ENCODE measurements at regions of chr19 and their contacts with region 1.

Region 1: DNA sequence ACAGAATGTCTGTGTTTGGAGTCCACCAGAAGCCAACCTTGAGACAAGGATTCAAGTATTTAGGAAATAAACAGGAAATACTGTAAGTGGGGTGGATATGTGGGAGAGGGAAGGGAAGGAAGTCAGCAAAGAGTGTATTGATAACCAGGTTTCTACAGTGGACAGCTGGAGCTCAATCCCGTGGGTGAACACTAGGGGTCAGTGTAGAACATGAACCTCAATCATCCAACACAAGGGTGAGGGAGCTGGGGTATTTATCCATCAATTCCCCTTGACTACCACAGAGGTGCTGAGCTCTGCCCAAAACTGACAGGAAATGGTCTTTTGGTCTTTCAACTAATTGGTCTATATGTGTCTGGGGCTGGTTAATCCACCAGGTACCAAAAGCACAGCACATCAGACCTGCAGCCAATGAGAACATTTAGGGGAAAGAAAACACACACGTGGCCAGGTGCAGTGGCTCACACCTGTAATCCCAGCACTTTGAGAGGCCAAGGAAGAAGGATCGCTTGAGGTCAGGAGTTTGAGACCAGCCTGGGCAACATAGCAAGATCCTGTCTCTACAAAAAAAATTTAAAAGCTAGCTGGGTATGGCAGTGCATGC is 5.6 kb upstream of the SYDE1 start:
- DNase-seq: peak; percentile 84
- ATAC-seq: peak; percentile 93
- H3K4me3 Mint-ChIP-seq: no peak overlapping the region
- H3K27ac Mint-ChIP-seq: no peak overlapping the region
- H3K4me1 Mint-ChIP-seq: peaks cover 2% of the 10 kb centered on the region
- H3K27me3 Mint-ChIP-seq: peaks cover 8% of the 10 kb centered on the region; the same call in 1 of the 2 replicates
- CTCF ChIP-seq: peak; percentile 67

Region 2: GRCh38 chr19:14786421-14786851 is 315.1 kb before region 1 on chr19:
- CTCF ChIA-PET with region 1: interaction called, 11 read pairs
- POLR2A ChIA-PET with region 1: no interaction called
- DNase-seq: peak; percentile 78
- ATAC-seq: peak; percentile 94
- H3K4me3 Mint-ChIP-seq: peak overlapping the region; percentile 53
- H3K27ac Mint-ChIP-seq: peak overlapping the region; percentile 70; the same call in 1 of the 2 replicates
- H3K4me1 Mint-ChIP-seq: peaks cover 10% of the 10 kb centered on the region
- H3K27me3 Mint-ChIP-seq: 0 out of 2 replicates have a peak, but pooled peaks cover 4% of the 10 kb centered on the region
- CTCF ChIP-seq: peak; percentile 84

Region 3: DNA sequence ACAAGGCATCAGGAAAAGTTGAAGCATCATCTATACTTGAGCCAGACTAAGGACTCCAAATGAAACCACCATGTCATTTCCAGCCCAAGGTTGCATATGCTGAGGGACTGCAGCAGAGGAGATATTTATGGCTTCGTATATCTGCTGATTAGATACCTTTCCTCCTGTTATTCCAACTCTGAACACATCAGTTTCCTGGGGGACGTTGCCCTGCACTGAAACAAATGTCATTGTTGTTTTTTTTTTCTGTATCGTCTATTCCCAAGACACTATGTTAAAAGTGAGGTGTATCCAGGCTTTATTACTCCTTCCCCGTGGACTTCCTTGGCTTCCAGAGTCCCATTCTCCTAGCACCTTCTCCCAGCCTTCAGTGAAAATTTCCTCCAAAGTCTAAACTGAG is 215.5 kb before region 1 on chr19 and contains the start of gene OR7A17:
- CTCF ChIA-PET with region 1: no interaction called
- POLR2A ChIA-PET with region 1: no interaction called
- DNase-seq: no peak
- ATAC-seq: no peak
- H3K4me3 Mint-ChIP-seq: no peak within 1 kb of the TSS
- H3K27ac Mint-ChIP-seq: no peak within 1 kb of the TSS
- H3K4me1 Mint-ChIP-seq: 0 out of 2 replicates have a peak, but pooled peaks cover 5% of the 10 kb centered on the region
- H3K27me3 Mint-ChIP-seq: peaks cover 19% of the 10 kb centered on the region
- CTCF ChIP-seq: no peak
- total RNA-seq, gene OR7A17: not detected in 3 replicates

Region 4: DNA sequence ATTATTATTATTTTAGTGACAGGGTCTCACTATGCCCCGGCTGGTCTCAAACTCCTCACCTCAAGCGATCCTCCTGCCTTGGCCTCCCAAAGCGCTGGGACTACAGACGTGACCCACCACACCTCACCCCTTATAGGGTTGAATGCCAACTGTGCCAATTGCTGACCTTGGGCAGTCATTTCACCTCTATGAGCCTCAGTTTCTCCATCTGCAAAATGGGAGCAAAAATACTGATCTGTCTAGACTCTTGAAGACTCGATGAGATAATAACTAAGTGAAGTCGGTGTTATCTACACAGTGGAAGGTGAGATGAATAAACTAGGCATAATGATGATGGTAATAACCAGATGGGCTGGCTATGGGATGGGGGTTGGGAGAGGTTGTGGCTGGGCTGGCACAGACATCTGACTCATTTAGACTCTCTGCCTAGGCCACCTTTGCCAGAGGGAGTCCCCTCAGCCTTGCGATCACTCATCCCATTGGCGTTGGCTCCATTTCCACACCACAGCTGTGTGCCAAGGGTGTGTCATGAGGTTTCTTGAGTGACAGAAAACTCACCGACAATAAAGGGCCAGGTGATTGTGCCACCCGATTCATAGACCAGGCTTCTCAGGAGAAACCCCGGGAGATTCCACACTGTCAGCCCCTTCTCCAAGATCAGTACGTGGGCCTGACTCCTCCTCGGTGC is 52.6 kb before region 1 on chr19 and contains the start of gene CASP14:
- CTCF ChIA-PET with region 1: no interaction called
- POLR2A ChIA-PET with region 1: no interaction called
- DNase-seq: no peak
- ATAC-seq: no peak
- H3K4me3 Mint-ChIP-seq: no peak within 1 kb of the TSS
- H3K27ac Mint-ChIP-seq: no peak within 1 kb of the TSS
- H3K4me1 Mint-ChIP-seq: no peaks in the 10 kb centered on the region
- H3K27me3 Mint-ChIP-seq: peaks cover 38% of the 10 kb centered on the region
- CTCF ChIP-seq: no peak
- total RNA-seq, gene CASP14: not detected in 3 replicates

Region 5: GRCh38 chr19:15112386-15112785 is 10.8 kb after region 1 on chr19:
- CTCF ChIA-PET with region 1: interaction called, 20 read pairs
- POLR2A ChIA-PET with region 1: no interaction called
- DNase-seq: peak; percentile 32
- ATAC-seq: peak; percentile 58
- H3K4me3 Mint-ChIP-seq: no peak overlapping the region
- H3K27ac Mint-ChIP-seq: peak overlapping the region; percentile 66; the same call in 1 of the 2 replicates
- H3K4me1 Mint-ChIP-seq: peaks cover 10% of the 10 kb centered on the region
- H3K27me3 Mint-ChIP-seq: no peaks in the 10 kb centered on the region
- CTCF ChIP-seq: peak; percentile 18; the same call in 1 of the 2 replicates

Region 6: DNA sequence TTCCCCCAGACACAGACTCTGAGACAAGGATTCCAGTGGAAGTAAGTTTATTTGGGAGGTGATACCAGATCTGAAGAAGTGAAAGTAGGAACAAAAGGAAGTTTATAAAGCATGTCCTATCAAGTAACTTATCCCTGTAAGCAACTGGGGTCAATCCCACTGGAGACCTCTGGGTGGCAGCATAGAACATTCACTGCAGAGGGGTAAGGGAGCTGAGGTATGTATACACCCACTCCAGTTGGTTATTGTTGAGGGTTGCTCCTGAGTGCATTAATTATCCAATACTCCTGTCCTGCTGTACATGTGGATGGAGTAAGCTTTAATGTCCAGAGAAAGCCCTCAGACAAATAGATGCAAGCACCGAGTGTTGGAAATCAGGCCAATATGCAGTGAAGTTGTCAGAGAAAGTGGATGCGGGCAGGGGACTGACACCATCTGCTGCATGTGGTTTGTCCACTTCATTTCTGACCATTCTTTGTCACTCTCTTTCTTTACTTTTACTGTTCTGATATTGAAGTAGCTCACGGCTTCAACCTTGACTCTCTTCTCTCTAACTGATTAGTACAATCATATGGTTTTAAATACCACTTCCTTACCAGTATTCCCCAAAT is 52.5 kb after region 1 on chr19:
- CTCF ChIA-PET with region 1: interaction called, 103 read pairs
- POLR2A ChIA-PET with region 1: no interaction called
- DNase-seq: peak; percentile 82
- ATAC-seq: peak; percentile 75
- H3K4me3 Mint-ChIP-seq: no peak overlapping the region
- H3K27ac Mint-ChIP-seq: no peak overlapping the region
- H3K4me1 Mint-ChIP-seq: no peaks in the 10 kb centered on the region; the same call in 1 of the 2 replicates
- H3K27me3 Mint-ChIP-seq: peaks cover 3% of the 10 kb centered on the region; the same call in 1 of the 2 replicates
- CTCF ChIP-seq: peak; percentile 55

Region 7: DNA sequence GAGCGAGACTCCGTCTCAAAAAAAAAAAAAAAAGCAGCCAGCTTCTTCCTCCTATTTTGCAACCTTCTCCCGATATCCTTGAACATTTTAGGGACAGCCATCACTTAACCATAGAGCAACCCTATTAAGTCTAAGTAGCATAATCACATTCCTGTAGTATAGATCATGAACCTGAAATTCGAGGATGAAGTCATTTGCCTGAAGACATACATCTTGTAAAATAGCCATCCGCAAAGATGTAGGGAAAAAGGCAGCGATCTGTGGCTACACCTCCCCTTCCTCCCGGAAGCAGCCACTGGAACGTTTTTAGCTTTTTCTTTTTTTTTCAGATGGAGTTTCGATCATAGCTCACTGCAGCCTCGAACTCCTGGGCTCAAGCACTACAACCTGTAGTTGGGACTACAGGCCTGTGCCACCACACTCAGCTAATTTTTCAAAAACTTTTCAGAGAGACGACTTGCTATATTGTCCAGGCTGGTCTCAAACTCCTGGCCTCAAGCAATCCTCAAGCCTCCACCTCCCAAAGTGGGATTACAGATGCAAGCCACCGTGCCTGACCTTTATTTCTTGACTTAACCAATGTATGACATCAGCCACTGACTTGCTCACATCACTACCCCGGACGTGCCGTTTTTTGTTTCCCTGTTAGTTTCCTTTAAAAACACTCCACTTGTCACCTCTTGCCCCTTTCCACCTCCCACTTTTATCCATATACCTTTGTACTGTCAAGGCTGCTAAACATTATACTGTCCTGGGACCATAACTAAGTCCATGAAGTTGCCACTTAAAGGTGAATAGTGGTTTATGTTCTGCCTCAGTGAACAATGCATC is 132.7 kb after region 1 on chr19:
- CTCF ChIA-PET with region 1: interaction called, 29 read pairs
- POLR2A ChIA-PET with region 1: no interaction called
- DNase-seq: no peak
- ATAC-seq: no peak
- H3K4me3 Mint-ChIP-seq: peak overlapping the region; percentile 63
- H3K27ac Mint-ChIP-seq: peak overlapping the region; percentile 82
- H3K4me1 Mint-ChIP-seq: peaks cover 8% of the 10 kb centered on the region; the same call in 1 of the 2 replicates
- H3K27me3 Mint-ChIP-seq: no peaks in the 10 kb centered on the region
- CTCF ChIP-seq: no peak

Region 8: DNA sequence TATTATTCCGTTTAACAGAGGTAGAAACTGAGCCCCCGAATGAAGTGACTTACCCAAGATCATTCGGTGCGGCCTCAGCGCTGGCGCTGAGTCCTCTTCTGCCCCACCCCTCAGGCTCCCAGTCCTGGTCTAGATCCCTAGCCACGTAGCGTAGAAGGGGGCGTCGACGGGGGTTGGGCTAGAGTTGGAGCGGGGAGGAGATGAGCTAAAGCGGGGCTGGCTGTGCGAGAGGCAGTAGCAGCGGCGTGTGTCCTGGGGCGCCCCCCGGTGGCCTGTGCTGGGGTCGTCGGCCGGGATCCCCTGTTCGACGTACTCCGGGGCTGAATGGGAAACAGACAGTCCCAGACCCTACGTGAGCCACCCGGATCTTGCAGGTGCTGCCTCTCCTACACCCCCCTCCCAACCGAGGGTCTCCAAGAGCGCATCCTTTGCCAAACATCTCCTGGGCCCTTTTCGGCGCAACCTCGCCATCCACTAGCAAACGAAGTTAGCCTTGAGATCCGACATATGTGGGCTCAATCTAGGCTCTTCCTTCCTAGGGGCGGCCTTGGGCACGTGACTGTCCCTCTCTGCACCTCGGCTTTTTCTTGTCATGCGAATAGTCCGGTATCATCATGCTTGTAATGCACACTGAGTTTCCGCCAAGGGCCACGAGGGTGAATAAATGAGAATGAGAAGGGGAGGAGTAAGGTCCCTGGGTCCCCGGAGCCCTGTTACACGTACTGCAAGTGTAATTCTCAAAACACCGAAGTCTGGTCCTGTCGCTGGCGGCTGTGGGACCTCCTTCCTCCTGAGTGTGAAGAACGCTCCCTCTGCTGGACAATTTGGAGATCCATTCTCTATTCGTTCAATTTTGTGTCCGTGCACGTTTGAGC is 454.4 kb after region 1 on chr19:
- CTCF ChIA-PET with region 1: interaction called, 13 read pairs
- POLR2A ChIA-PET with region 1: no interaction called
- DNase-seq: peak; percentile 99
- ATAC-seq: peak; percentile 89
- H3K4me3 Mint-ChIP-seq: peak overlapping the region; percentile 61
- H3K27ac Mint-ChIP-seq: peak overlapping the region; percentile 79
- H3K4me1 Mint-ChIP-seq: peaks cover 6% of the 10 kb centered on the region
- H3K27me3 Mint-ChIP-seq: peaks cover 41% of the 10 kb centered on the region
- CTCF ChIP-seq: peak; percentile 83